ENCODE measurements at regions of chr16 and their contacts with region 1.

Region 1: DNA sequence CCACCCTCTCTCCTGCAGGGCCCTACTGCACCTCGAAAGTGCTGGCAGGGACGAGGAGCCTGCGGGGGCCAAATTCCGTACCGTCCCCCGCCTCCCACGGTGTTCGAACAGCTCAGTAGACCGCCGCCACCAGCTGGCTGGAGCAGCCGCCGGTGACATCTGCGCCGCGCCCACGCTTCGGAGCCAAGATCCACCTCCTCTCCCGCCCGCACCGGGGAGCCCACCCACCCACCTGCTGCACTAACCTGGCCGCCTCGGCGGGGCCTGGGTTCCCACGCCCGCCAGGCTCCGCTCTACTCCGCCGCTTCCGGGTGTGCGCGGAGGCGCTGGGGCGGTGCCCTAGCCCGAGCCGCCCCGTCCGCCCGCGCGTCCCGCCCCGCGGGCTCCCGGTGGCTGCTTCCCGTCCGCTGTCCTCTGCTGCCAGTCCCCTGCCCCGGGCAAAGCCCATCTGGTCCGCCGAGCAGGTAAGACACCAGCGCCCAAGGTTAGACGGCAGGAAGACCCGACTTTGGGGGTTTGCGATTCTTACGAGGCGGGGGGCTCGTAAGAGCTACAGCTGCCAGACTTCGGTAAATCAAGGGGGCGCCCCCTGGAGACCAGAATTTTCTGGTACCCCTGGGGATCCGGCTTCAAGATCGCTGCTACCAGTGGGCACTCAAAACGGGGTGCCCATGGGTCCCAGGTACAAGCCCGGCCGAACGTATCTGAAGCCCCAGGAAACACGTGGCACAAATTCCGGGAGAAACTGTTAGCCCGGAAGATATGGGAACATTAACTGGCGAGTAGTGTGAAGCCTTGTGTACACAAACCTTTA is at the starts of genes FBXL8 and TRADD:
- DNase-seq: peak; percentile 78
- H3K4me3 Mint-ChIP-seq: peak within 1 kb of the TSS; percentile 88
- H3K27ac Mint-ChIP-seq: peak within 1 kb of the TSS; percentile 91
- H3K4me1 Mint-ChIP-seq: peaks cover 47% of the 10 kb centered on the region
- H3K27me3 Mint-ChIP-seq: peaks cover 24% of the 10 kb centered on the region
- total RNA-seq, gene FBXL8: 13.8 to 15.3 TPM
- total RNA-seq, gene TRADD: 17.7 to 21.1 TPM

Region 2: DNA sequence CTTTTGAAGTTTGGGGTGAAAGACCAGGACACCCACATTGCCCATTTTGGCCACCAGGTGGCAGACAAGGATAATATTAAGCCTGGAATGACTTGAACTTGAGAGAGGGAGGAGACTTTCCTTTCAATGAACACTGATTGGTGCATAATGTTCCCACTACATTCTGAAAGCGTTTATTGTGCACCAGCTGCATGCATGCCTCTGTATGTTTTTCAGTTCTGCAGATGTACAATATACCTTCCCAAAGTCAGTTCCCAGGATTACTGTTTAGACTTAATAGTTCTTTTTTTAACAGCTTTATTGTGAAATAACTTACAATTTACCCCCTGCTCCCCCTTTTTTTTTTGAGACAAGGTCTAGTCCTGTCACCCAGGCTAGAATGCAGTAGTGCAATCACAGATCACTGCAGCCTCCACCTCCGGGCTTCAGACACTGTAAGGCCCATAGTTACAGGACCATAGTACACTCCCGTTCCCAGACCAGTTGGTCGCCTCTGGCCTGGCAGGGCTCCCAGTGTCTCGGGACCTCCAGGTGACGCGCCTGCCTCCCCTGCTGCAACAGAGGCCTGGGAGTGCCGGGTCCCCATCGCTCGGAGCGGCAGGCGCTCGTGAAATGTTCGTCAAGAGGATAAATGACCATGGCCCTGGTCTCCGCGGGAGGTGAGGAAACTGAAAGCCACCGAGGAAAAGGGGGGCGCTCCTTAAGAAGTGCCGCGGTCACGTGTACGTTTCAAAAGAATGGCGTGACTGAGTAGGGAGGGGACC is 212.3 kb before region 1 on chr16:
- CTCF ChIA-PET with region 1: interaction called, 4 read pairs
- intact Hi-C with region 1: loop called (anchors 1 kb)
- DNase-seq: peak; percentile 95
- H3K4me3 Mint-ChIP-seq: peak overlapping the region; percentile 81
- H3K27ac Mint-ChIP-seq: no peak overlapping the region
- H3K4me1 Mint-ChIP-seq: peaks cover 17% of the 10 kb centered on the region
- H3K27me3 Mint-ChIP-seq: peaks cover 34% of the 10 kb centered on the region

Region 3: DNA sequence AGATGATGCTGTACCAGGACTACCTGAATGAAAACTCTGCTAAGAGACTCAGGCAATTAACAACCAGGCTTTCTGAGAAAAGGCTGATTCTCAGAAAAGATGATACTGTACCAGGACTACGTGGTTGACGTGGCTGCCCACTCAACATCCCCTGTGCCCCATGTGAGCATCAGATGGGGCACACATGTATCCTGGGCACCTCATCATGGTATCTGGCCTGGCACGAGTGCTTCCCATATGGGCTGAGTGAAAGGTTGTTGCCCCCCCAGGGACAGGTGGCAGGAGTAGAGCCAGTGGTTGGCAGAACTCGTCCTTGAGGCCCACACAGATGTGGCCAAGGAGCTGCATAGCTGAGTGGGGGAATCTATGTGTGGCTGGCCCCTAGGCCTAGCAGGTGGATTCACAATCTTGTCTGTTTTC is 174.9 kb before region 1 on chr16:
- CTCF ChIA-PET with region 1: interaction called, 16 read pairs
- intact Hi-C with region 1: loop called (anchors 1 kb)
- DNase-seq: peak; percentile 81
- H3K4me3 Mint-ChIP-seq: no peak overlapping the region
- H3K27ac Mint-ChIP-seq: peak overlapping the region; percentile 96
- H3K4me1 Mint-ChIP-seq: peaks cover 30% of the 10 kb centered on the region
- H3K27me3 Mint-ChIP-seq: no peaks in the 10 kb centered on the region

Region 4: DNA sequence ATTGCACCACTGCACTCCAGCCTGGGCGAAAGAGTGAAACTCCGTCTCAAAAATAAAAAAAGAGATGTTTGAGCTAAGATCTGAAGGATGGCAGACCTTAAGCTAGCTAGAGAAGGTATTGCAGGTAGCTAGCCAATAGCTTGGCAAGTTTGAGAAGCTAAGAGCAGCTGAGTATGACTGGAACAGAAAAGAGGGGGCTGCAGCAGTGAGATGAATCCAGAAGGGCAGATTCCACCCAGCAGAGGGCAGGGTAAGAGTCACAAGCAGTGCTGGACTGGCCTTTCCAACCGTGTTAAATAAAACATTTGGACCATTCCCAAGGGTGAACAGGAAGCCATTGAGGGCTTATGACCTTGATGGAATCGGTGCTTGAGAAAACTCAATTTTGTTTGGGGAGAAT is 55.7 kb before region 1 on chr16:
- CTCF ChIA-PET with region 1: interaction called, 11 read pairs
- intact Hi-C with region 1: loop called (anchors 2 kb)
- DNase-seq: no peak
- H3K4me3 Mint-ChIP-seq: no peak overlapping the region
- H3K27ac Mint-ChIP-seq: peak overlapping the region; percentile 28
- H3K4me1 Mint-ChIP-seq: peaks cover 7% of the 10 kb centered on the region
- H3K27me3 Mint-ChIP-seq: no peaks in the 10 kb centered on the region

Region 5: GRCh38 chr16:67173808-67174705 is 14.3 kb after region 1 on chr16:
- CTCF ChIA-PET with region 1: interaction called, 16 read pairs
- intact Hi-C with region 1: no loop called
- DNase-seq: peak; percentile 70
- H3K4me3 Mint-ChIP-seq: peak overlapping the region; percentile 64
- H3K27ac Mint-ChIP-seq: no peak overlapping the region
- H3K4me1 Mint-ChIP-seq: peaks cover 28% of the 10 kb centered on the region
- H3K27me3 Mint-ChIP-seq: peaks cover 70% of the 10 kb centered on the region

Region 6: DNA sequence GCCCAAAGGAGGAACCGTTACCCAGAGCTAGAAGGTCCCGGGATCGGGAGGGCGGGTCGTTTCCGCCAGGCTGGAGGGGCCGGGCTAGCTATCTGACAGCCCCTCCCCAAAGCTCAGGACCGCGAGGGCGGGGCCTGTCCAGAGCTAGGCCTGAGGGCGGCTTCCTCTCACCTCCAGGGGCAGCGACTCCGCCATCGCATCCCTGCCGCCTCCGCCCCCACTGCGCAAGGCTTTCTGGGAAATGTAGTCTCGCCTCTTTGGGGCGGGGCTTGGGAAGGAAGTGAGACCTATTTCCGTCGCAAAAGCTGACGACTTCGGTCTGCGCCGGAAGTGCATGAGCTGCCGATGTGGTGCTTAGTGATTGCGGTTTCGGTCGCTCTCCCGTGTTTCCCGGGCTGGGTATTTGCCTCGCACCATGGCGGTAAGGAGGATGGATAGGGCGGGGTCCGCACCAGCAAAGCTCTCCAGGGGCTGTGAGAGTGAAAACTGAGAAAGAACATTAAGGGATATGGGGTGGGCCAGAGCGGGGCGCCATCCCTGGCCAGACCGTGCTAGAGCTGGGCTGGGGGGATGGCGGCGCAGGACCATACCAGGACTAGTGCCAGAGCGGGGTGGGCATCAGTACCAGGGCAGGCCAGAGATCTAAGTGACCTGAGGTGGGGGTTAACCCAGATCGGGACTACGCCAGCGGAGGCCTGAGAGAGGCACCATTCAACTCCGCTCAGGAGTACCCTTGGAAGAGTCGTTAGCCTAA is 67.2 kb after region 1 on chr16 and contains the start of gene TMEM208:
- CTCF ChIA-PET with region 1: no interaction called
- intact Hi-C with region 1: loop called (anchors 1 kb)
- DNase-seq: peak; percentile 99
- H3K4me3 Mint-ChIP-seq: peak within 1 kb of the TSS; percentile 100
- H3K27ac Mint-ChIP-seq: peak within 1 kb of the TSS; percentile 96
- H3K4me1 Mint-ChIP-seq: peaks cover 51% of the 10 kb centered on the region
- H3K27me3 Mint-ChIP-seq: no peaks in the 10 kb centered on the region
- total RNA-seq, gene TMEM208: 24.6 to 29.4 TPM

Region 7: GRCh38 chr16:67279296-67280089 is 119.7 kb after region 1 on chr16 and contains the start of gene PLEKHG4:
- CTCF ChIA-PET with region 1: no interaction called
- intact Hi-C with region 1: no loop called
- DNase-seq: peak; percentile 85
- H3K4me3 Mint-ChIP-seq: peak within 1 kb of the TSS; percentile 79
- H3K27ac Mint-ChIP-seq: peak within 1 kb of the TSS; percentile 86
- H3K4me1 Mint-ChIP-seq: peaks cover 20% of the 10 kb centered on the region
- H3K27me3 Mint-ChIP-seq: no peaks in the 10 kb centered on the region
- total RNA-seq, gene PLEKHG4: 14.3 to 14.4 TPM

Region 8: GRCh38 chr16:67393035-67393787 is 233.4 kb after region 1 on chr16 and contains the start of gene TPPP3:
- CTCF ChIA-PET with region 1: no interaction called
- intact Hi-C with region 1: loop called (anchors 10 kb)
- DNase-seq: peak; percentile 47
- H3K4me3 Mint-ChIP-seq: peak within 1 kb of the TSS; percentile 15
- H3K27ac Mint-ChIP-seq: no peak within 1 kb of the TSS
- H3K4me1 Mint-ChIP-seq: peaks cover 7% of the 10 kb centered on the region
- H3K27me3 Mint-ChIP-seq: peaks cover 20% of the 10 kb centered on the region
- total RNA-seq, gene TPPP3: not detected

Region 9: GRCh38 chr16:69017036-69017783 is 1857.4 kb after region 1 on chr16:
- CTCF ChIA-PET with region 1: no interaction called
- intact Hi-C with region 1: no loop called
- DNase-seq: no peak
- H3K4me3 Mint-ChIP-seq: no peak overlapping the region
- H3K27ac Mint-ChIP-seq: no peak overlapping the region
- H3K4me1 Mint-ChIP-seq: peaks cover 8% of the 10 kb centered on the region
- H3K27me3 Mint-ChIP-seq: no peaks in the 10 kb centered on the region

Measured in activated naive CD4-positive, alpha-beta T cell treated with anti-CD3 and anti-CD28 coated beads for 36 hours (primary cell).